Heart right ventricle (tissue), 16 donors: ENCODE measurements at regions of chr11 and their contacts with region 1.

Region 1: DNA sequence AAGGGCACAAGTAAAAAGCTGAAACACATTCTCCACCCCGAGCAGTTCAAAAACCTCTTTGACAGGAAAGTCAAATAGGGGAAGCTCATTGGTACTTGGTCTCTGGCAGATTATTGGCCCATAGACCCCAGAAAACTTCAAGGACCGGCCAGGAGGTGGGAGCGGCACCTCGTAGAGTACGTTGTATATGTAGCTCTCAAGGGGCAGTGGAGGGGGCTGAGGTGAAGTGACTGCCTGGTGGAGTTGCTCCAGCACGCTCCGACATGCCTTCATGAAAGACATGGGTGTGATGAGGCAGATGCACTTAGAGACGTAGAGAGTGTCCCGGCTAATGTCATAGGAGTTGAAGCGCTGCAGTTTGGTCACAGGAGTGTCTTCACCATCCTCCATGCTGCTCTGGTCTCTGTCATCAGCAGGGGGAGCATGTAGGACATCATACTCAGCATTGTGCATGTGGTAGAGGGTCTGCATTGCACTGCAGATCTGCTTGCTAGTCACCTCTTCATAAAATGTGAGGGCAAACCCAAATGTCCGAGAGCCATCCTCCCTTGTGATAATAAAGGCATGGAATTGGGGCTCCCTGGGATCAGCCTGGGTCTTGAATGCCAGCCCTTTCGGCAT is 61.3 kb downstream of the DENND5A start:
- DNase-seq: peak in 1 of 2 donors; percentile 12
- ATAC-seq: peak; percentile 40 to 75 (median 65)
- H3K4me3 ChIP-seq: no peak overlapping the region
- H3K27ac ChIP-seq: peak overlapping the region in 1 of 10 donors; percentile 77
- H3K4me1 ChIP-seq: peaks cover 3 to 78% (median 39%) of the 10 kb centered on the region in 9 donors
- H3K27me3 ChIP-seq: no peaks in the 10 kb centered on the region
- CTCF ChIP-seq: peak in 7 of 9 donors; percentile 8 to 55 (median 41)

Region 2: DNA sequence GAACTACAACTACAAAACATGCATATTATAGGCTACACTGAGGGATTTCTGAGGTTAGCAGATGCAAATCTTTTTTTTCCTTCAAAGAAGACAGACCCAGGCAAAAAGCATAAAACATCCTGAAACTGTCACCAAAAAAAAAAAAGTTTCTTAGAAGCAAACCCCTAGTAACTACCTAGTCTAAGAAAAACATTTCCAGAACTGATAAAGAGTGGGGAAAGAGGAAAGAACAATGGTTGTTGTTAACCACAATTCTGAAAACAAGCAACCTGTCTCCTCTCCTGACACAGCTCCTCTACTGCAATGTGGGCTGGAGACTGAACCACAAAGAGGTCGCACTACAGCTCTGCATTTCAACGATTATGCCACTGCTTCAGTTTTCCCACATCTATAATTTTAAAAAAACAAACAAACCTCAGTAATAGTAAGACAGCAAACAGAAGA is 46.4 kb after region 1 on chr11:
- intact Hi-C with region 1: loop called in 1 of 10 experiments (anchors 10 kb)
- DNase-seq: no peak
- ATAC-seq: peak in 2 of 8 donors; percentile 35
- H3K4me3 ChIP-seq: no peak overlapping the region
- H3K27ac ChIP-seq: peak overlapping the region in 6 of 10 donors; percentile 7 to 83 (median 30)
- H3K4me1 ChIP-seq: peaks cover 3 to 82% (median 51%) of the 10 kb centered on the region in 9 donors
- H3K27me3 ChIP-seq: no peaks in the 10 kb centered on the region
- CTCF ChIP-seq: no peak